Activated CD8-positive, alpha-beta T cell treated with anti-CD3 and anti-CD28 coated beads, Interleukin-2, amount 10 ng/mL, durations not matched to agents 7 days and 5 days (primary cell): ENCODE measurements at regions of chr1 and their contacts with region 1.

Region 1: GRCh38 chr1:211698161-211699026 is 23.0 kb upstream of the NEK2 start:
- DNase-seq: peak; percentile 90
- ATAC-seq: peak; percentile 95
- H3K4me3 Mint-ChIP-seq: peak overlapping the region; percentile 32
- H3K27ac Mint-ChIP-seq: peak overlapping the region; percentile 31
- H3K4me1 Mint-ChIP-seq: peaks cover 50% of the 10 kb centered on the region
- H3K27me3 Mint-ChIP-seq: peaks cover 3% of the 10 kb centered on the region

Region 2: GRCh38 chr1:211710566-211711314 is 12.3 kb after region 1 on chr1:
- CTCF ChIA-PET with region 1: interaction called, 20 read pairs
- POLR2A ChIA-PET with region 1: no interaction called
- DNase-seq: no peak
- ATAC-seq: no peak
- H3K4me3 Mint-ChIP-seq: no peak overlapping the region
- H3K27ac Mint-ChIP-seq: peak overlapping the region; percentile 16
- H3K4me1 Mint-ChIP-seq: peaks cover 5% of the 10 kb centered on the region
- H3K27me3 Mint-ChIP-seq: no peaks in the 10 kb centered on the region

Region 3: GRCh38 chr1:211752951-211753486 is 54.6 kb after region 1 on chr1:
- CTCF ChIA-PET with region 1: interaction called, 11 read pairs
- POLR2A ChIA-PET with region 1: no interaction called
- DNase-seq: no peak
- ATAC-seq: no peak
- H3K4me3 Mint-ChIP-seq: no peak overlapping the region
- H3K27ac Mint-ChIP-seq: no peak overlapping the region
- H3K4me1 Mint-ChIP-seq: no peaks in the 10 kb centered on the region
- H3K27me3 Mint-ChIP-seq: no peaks in the 10 kb centered on the region

Region 4: DNA sequence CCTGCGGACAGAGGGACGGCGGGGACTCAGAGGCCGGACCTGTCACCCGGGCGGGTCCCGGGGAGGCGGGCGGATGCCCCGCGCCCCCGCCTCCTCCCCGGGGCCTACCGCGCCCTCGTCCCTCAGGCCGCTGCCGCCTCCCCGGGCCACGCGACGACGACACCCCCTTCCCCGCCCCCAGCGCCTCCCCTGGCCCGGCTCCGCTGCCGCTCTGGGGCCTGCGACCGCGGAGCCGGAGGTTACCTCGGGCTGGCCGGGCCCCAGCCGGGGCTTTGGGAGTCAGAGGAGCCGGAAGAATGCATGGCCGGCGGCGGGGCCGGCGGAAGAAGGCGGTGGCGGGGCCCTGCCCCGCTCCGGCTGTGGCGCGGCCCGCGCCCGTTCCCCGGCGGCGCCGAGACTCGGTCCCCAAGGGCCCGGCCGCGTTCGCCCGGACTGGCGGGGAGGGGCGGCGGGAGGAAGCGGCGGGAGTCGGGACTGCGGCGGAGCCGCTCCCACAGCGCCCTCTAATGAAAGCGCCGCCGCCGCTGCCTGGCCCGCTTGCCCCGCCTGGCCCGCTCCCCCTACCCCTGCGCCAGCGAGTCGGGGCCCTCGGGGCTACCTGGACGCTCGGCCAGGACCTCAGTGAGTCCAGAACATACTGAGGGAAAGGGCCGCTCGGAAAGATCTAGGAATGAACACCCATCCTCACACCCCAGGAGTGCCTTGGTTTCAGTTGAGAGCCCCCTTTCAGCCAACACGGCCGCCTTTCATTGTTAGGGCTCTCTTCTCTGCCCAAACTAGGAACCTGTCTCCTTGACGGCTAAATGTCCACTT is 132.1 kb after region 1 on chr1 and contains the start of gene LPGAT1:
- CTCF ChIA-PET with region 1: interaction called, 28 read pairs
- POLR2A ChIA-PET with region 1: interaction called, 3 read pairs
- DNase-seq: peak; percentile 74
- ATAC-seq: peak; percentile 74
- H3K4me3 Mint-ChIP-seq: peak within 1 kb of the TSS; percentile 88
- H3K27ac Mint-ChIP-seq: peak within 1 kb of the TSS; percentile 89
- H3K4me1 Mint-ChIP-seq: peaks cover 69% of the 10 kb centered on the region
- H3K27me3 Mint-ChIP-seq: no peaks in the 10 kb centered on the region
- total RNA-seq, gene LPGAT1: 59.3 to 60.5 TPM

Region 5: GRCh38 chr1:211939876-211940468 is 241.6 kb after region 1 on chr1:
- CTCF ChIA-PET with region 1: interaction called, 26 read pairs
- POLR2A ChIA-PET with region 1: no interaction called
- DNase-seq: peak; percentile 37
- ATAC-seq: peak; percentile 21
- H3K4me3 Mint-ChIP-seq: no peak overlapping the region
- H3K27ac Mint-ChIP-seq: no peak overlapping the region
- H3K4me1 Mint-ChIP-seq: peaks cover 43% of the 10 kb centered on the region
- H3K27me3 Mint-ChIP-seq: no peaks in the 10 kb centered on the region